ENCODE measurements at regions of chr2 and their contacts with region 1.

Region 1: DNA sequence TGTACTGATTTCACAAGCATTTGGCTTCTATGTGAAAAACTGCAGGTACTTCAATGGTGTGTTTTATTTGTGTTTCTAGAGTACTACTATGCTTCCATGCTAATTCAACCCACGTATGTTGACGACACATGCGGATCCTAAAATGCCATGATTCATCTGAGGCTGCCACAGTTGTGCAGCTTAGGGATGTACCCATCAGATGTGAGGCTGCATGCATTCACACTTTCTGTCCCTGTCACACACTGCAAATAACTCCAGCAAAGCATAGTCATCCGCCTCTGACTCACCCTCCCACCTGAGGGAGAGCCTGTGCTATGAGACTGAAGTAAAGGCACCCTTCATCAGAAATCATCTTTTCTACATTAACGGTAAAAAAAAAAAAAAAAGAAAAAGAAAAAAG is 22.1 kb upstream of the SERTAD2 start:
- DNase-seq: peak; percentile 22
- H3K4me3 Mint-ChIP-seq: no peak overlapping the region
- H3K27ac Mint-ChIP-seq: no peak overlapping the region
- H3K4me1 Mint-ChIP-seq: peaks cover 36% of the 10 kb centered on the region
- H3K27me3 Mint-ChIP-seq: no peaks in the 10 kb centered on the region

Region 2: GRCh38 chr2:64695721-64696261 is 19.9 kb after region 1 on chr2:
- CTCF ChIA-PET with region 1: interaction called, 12 read pairs
- POLR2A ChIA-PET with region 1: interaction called, 3 read pairs
- DNase-seq: no peak
- H3K4me3 Mint-ChIP-seq: no peak overlapping the region
- H3K27ac Mint-ChIP-seq: no peak overlapping the region
- H3K4me1 Mint-ChIP-seq: peaks cover 49% of the 10 kb centered on the region
- H3K27me3 Mint-ChIP-seq: no peaks in the 10 kb centered on the region

Measured in activated CD4-positive, alpha-beta T cell treated with anti-CD3 and anti-CD28 coated beads, Interleukin-2, amount 10 ng/mL, durations not matched to agents 7 days and 5 days (primary cell).